GM13976 (cell line): ENCODE measurements at regions of chrX and their contacts with region 1.

Region 1: GRCh38 chrX:66408507-66408906 is 230.4 kb downstream of the EDA2R start:
- DNase-seq: peak; percentile 8
- CTCF ChIP-seq: peak; percentile 26

Region 2: GRCh38 chrX:65745992-65746391 is 662.5 kb before region 1 on chrX:
- in situ Hi-C with region 1: loop called (anchors 25 kb)
- DNase-seq: no peak
- CTCF ChIP-seq: no peak

Region 3: DNA sequence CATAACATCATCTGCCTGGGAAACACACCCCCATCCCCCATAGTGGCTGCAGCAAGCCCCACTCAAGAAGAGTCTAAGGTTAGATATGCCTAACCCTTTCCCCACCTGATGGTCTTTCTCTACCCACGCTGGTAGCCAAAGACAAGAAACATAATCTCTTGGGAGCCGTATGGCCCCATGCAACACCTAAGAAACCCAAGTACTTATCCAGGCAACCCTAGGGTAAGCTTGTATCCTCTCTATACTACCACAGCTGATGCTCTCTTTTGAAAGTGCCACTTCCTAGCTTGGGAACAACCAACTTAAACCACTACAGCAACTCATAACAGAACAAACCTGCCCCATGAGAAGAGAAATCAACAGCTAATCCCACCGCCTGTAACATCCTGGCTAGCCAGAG is 579.9 kb before region 1 on chrX:
- in situ Hi-C with region 1: no loop called
- DNase-seq: no peak
- CTCF ChIP-seq: no peak

Region 4: GRCh38 chrX:66200855-66201795 is 207.4 kb before region 1 on chrX:
- in situ Hi-C with region 1: no loop called
- DNase-seq: peak; percentile 13
- CTCF ChIP-seq: no peak

Region 5: DNA sequence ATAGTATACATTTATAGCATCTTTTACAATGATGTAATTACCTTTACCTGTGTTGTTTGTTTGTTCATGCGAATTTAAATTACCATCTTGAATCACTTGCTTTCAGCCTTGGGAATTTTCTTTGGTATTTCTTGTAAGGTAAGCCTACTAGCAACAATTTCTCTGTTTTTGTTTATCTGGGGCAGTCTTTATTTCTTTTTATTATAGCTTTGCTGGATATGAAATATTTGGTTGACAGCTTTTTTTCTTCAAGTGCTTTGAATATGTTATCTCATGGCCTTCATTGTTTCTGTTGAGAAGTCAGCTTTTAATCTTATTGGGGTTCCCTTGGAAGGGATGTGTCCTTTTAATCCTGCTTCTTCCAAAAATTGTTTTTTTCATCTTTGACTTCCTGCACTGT is 523.2 kb after region 1 on chrX:
- in situ Hi-C with region 1: no loop called
- DNase-seq: no peak
- CTCF ChIP-seq: no peak